ENCODE measurements at regions of chr3 and their contacts with region 1.

Region 1: DNA sequence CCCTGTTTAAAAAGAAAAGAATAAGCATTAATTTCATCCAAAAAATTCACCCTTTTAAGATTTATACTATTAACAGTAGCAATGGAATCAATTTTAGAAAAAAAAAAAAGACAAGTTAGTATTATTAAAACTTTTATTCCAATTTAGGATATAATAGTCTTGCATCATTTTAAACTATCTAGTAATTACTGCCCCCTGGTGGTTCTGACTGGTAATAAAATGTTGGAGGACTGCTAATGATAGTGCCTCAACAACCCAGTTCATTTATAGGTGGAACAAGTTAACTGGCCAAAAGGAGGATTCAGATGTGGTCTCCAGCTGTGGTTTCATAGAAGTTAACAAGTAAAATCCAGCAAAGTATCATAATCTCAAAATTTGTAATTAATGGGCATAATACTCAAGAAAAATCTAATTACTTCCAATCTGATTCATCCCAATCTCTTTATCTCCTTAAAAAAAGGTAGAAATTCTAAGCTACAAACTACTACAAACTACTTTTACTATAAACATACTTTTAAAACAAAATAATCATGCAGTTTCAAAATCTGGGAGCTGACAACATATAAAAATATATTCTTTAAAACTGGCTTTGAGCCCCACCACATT is 30.7 kb upstream of the WDR49 start:
- DNase-seq: peak in 1 of 2 donors; percentile 63
- ATAC-seq: peak in 3 of 8 donors; percentile 50 to 58 (median 55)
- H3K4me3 ChIP-seq: no peak overlapping the region
- H3K27ac ChIP-seq: no peak overlapping the region
- H3K4me1 ChIP-seq: no peaks in the 10 kb centered on the region
- H3K27me3 ChIP-seq: no peaks in the 10 kb centered on the region
- CTCF ChIP-seq: peak; percentile 62 to 84 (median 79)

Region 2: GRCh38 chr3:167380004-167380689 is 304.3 kb before region 1 on chr3 and contains the start of gene ZBBX:
- intact Hi-C with region 1: loop called in 2 of 10 experiments (anchors 5 kb)
- DNase-seq: peak; percentile 70 to 81
- ATAC-seq: peak; percentile 84 to 99 (median 92)
- H3K4me3 ChIP-seq: peak within 1 kb of the TSS in 9 of 10 donors; percentile 21 to 48 (median 45)
- H3K27ac ChIP-seq: no peak within 1 kb of the TSS
- H3K4me1 ChIP-seq: peaks cover 0 to 7% (median 0%) of the 10 kb centered on the region in 9 donors
- H3K27me3 ChIP-seq: no peaks in the 10 kb centered on the region
- CTCF ChIP-seq: peak; percentile 60 to 93 (median 78)
- total RNA-seq, gene ZBBX: 0.30 to 1.1 TPM in 2 of 10 donors, not detected in the others

Region 3: DNA sequence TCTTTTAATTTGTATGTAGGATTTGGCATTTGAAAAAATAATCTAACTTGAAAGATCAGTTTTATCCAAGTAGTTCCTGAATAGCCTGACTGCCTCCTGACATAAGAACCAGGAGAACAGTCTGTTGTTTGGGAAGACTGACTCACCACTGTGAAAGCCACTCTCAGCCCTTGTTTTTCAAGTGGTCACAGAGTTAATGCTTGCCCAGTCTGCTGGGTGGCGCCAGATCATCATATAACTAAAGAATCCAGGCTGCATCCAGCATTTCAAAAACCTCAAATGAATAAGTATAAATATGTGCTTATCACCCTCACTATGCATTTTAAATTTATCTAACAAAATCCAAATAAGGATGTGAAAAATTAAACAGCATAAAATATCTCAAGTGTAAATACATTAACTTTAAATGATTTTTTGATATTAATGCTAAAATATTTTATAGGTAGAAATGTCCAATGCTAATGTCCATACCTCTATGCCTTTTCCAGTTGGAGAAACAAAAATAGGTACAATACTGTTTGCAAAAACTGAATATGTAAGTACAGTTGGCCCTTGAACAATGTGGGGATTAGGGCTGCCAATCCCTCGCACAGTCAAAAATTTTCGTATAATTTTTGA is 277.5 kb before region 1 on chr3:
- intact Hi-C with region 1: loop called in 7 of 10 experiments (anchors 2 to 10 kb)
- DNase-seq: peak in 1 of 2 donors; percentile 21
- ATAC-seq: peak in 7 of 8 donors; percentile 43 to 96 (median 83)
- H3K4me3 ChIP-seq: no peak overlapping the region
- H3K27ac ChIP-seq: no peak overlapping the region
- H3K4me1 ChIP-seq: no peaks in the 10 kb centered on the region
- H3K27me3 ChIP-seq: no peaks in the 10 kb centered on the region
- CTCF ChIP-seq: peak in 7 of 9 donors; percentile 36 to 63 (median 52)

Measured in heart right ventricle (tissue), 16 donors.